ENCODE measurements at regions of chr18 and their contacts with region 1.

Region 1: GRCh38 chr18:23515911-23516546 is 12.7 kb downstream of the RMC1 start:
- DNase-seq: peak; percentile 86
- ATAC-seq: peak; percentile 96
- H3K4me3 Mint-ChIP-seq: no peak overlapping the region
- H3K27ac Mint-ChIP-seq: peak overlapping the region; percentile 52
- H3K4me1 Mint-ChIP-seq: peaks cover 21% of the 10 kb centered on the region
- H3K27me3 Mint-ChIP-seq: no peaks in the 10 kb centered on the region

Region 2: DNA sequence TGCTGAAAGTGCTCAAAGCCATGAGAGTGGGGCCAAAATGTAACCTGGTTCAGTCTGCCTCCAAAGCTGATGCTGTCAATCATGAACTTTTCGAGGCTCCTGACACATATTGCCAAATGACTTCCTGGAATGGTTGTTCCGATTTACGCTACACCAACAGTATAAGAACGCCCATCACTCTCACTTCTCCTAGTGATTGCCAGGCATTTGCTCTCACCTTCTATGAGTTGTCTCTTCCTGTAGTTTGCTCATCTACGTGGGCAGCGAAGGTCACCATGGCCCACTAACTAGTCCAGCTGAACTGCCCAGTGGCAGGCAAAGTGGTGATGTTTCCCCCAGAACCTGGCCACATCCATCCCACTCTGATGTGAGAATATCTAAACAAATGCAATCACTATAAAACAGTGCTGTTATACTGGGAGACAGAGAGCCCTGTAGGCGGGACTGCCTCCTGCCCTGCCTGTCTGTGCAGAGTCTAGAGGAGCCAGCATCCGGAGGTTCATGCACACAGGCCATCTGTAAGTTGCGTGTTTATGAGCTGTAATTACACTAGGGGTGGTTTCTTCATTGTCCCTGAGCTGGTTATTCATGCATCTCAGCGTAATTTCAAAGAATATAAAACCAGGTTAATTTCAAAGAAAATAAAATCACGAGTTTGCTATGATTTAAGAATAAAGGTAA is 389.5 kb before region 1 on chr18:
- CTCF ChIA-PET with region 1: no interaction called
- DNase-seq: no peak
- ATAC-seq: no peak
- H3K4me3 Mint-ChIP-seq: no peak overlapping the region
- H3K27ac Mint-ChIP-seq: no peak overlapping the region
- H3K4me1 Mint-ChIP-seq: no peaks in the 10 kb centered on the region
- H3K27me3 Mint-ChIP-seq: peaks cover 8% of the 10 kb centered on the region

Region 3: DNA sequence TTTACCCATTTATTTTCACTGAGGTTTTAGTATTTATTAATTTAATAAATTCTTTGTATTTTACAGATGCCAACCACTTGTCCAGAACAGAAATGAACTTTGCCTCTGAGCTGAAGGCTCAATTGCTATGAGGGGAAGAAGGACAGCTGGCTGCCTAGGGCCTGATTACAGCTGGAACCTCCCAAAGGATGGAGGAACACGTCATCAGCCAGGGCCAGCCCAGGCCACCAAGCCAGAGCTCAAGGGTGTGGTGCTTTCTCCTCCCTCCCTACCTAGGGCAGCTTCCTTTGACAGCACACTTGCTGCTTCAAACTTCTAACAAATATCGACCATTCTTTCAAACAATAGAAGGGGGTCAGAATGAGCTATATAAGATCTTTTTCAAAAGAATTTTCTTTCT is 82.7 kb before region 1 on chr18:
- CTCF ChIA-PET with region 1: no interaction called
- DNase-seq: no peak
- ATAC-seq: no peak
- H3K4me3 Mint-ChIP-seq: no peak overlapping the region
- H3K27ac Mint-ChIP-seq: no peak overlapping the region
- H3K4me1 Mint-ChIP-seq: peaks cover 15% of the 10 kb centered on the region
- H3K27me3 Mint-ChIP-seq: no peaks in the 10 kb centered on the region

Region 4: GRCh38 chr18:23503038-23503962 is 12.7 kb before region 1 on chr18 and contains the start of gene RMC1:
- CTCF ChIA-PET with region 1: interaction called, 34 read pairs
- DNase-seq: peak; percentile 97
- ATAC-seq: peak; percentile 88
- H3K4me3 Mint-ChIP-seq: peak within 1 kb of the TSS; percentile 89
- H3K27ac Mint-ChIP-seq: peak within 1 kb of the TSS; percentile 84
- H3K4me1 Mint-ChIP-seq: peaks cover 44% of the 10 kb centered on the region
- H3K27me3 Mint-ChIP-seq: no peaks in the 10 kb centered on the region
- total RNA-seq, gene RMC1: 48.7 to 51.7 TPM

Region 5: DNA sequence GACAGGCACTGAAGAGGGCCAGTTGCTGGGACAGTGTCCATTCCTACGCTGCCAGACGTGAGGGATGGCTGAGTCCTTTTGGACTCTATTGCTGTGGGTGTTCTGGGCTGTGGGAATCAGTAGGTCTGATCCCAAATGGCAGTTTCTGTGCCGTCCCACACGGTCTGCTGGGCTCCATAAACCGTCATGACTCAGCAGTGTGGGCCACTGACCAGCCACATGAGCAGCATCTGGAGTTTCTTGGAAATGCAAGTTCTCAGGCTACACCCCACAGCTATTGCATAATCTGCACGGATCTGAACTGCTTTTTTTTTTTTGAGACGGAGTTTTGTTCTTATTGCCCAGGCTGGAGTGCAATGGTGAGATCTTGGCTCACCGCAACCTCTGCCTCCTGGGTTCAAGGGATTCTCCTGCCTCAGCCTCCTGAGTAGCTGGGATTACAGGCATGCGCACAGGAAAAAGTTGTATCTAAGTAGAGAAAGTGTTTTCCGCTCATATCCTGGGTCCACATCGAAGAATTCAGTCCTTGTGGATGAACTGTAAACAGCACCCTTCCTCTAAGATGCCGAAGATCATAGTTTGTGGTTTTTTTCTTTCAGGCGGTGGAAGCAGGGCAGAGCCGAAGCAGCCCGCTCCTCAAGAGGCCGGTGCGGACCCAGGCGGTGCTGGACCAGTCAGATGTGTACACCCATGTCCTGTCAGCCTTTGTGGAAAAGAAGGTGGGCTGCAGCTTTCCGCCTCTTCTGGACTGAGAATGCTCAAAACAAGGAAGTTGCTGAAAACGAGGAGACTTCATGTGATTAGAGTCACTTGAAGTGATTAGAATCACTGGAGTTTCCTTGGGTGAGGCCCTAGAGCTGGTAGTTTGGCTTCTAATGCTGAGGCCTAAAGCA is 12.8 kb after region 1 on chr18:
- CTCF ChIA-PET with region 1: interaction called, 13 read pairs
- DNase-seq: no peak
- ATAC-seq: no peak
- H3K4me3 Mint-ChIP-seq: no peak overlapping the region
- H3K27ac Mint-ChIP-seq: no peak overlapping the region
- H3K4me1 Mint-ChIP-seq: peaks cover 7% of the 10 kb centered on the region
- H3K27me3 Mint-ChIP-seq: no peaks in the 10 kb centered on the region

Region 6: DNA sequence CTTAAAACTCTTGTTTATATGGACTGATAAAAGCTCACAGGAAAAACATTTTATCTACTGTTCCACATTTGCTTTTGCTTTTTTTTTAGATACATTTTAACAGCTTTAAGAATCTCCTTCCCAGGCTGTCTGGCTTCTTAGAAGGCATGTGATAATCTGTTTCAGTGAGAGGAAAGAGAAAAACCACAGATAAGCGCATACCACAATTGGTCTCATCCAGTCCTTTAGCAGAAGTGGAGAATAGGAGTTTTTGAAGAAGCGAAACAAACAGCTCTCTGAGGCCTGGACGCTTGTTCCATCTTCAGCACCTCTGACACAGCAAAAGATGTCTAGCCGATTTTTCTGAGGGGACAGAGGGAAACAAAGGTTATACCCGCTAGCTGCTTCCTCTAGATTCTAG is 24.8 kb after region 1 on chr18:
- CTCF ChIA-PET with region 1: interaction called, 11 read pairs
- DNase-seq: peak; percentile 56
- ATAC-seq: peak; percentile 68
- H3K4me3 Mint-ChIP-seq: peak overlapping the region; percentile 41
- H3K27ac Mint-ChIP-seq: peak overlapping the region; percentile 72
- H3K4me1 Mint-ChIP-seq: peaks cover 35% of the 10 kb centered on the region
- H3K27me3 Mint-ChIP-seq: no peaks in the 10 kb centered on the region

Region 7: DNA sequence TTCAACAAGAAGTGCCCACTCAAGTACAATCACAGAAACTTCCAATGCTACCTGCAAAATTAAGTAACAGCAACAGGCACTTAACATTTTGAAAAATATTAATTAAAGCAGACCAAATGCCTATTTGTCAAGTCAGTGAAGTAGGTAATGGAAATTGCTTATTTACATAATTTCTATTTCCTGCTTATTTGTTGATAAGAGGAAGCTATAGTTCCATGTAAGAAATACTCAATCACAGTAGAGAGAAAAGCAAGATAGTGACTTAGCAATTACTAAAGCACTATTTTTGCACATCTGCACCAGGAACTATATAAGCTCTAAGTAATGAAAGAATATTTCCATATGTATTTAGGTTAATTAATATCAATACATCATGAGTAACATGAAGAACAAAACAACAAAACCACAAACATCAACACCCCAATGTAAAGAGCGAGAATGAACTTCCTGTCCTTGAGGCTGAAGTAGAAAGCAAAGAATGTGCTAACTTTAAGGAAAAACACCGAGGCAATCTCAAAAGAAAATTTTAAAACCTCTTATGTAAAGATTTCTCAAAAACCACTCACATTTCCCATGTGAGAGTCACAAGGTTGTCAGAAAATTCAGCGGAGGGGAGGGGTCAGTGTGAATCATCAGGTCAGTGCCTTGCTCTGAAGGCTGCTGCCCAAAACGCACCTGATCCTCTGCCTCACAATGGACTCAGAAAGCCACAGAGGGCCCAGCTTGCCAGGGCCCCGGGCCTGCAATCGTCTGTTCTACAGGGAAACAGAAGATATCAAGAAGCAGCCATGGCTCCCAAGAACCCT is 57.8 kb after region 1 on chr18:
- CTCF ChIA-PET with region 1: interaction called, 12 read pairs
- DNase-seq: peak; percentile 61
- ATAC-seq: peak; percentile 70
- H3K4me3 Mint-ChIP-seq: peak overlapping the region; percentile 3
- H3K27ac Mint-ChIP-seq: peak overlapping the region; percentile 81
- H3K4me1 Mint-ChIP-seq: peaks cover 38% of the 10 kb centered on the region
- H3K27me3 Mint-ChIP-seq: no peaks in the 10 kb centered on the region

Region 8: GRCh38 chr18:23586249-23587196 is 70.5 kb after region 1 on chr18 and contains the start of gene NPC1:
- CTCF ChIA-PET with region 1: interaction called, 86 read pairs
- DNase-seq: peak; percentile 95
- ATAC-seq: peak; percentile 93
- H3K4me3 Mint-ChIP-seq: peak within 1 kb of the TSS; percentile 94
- H3K27ac Mint-ChIP-seq: peak within 1 kb of the TSS; percentile 98
- H3K4me1 Mint-ChIP-seq: peaks cover 38% of the 10 kb centered on the region
- H3K27me3 Mint-ChIP-seq: no peaks in the 10 kb centered on the region
- total RNA-seq, gene NPC1: 36.1 to 37.4 TPM

Region 9: GRCh38 chr18:23703057-23703986 is 187.3 kb after region 1 on chr18:
- CTCF ChIA-PET with region 1: interaction called, 10 read pairs
- DNase-seq: no peak
- ATAC-seq: no peak
- H3K4me3 Mint-ChIP-seq: no peak overlapping the region
- H3K27ac Mint-ChIP-seq: no peak overlapping the region
- H3K4me1 Mint-ChIP-seq: peaks cover 8% of the 10 kb centered on the region
- H3K27me3 Mint-ChIP-seq: peaks cover 51% of the 10 kb centered on the region

Measured in activated CD8-positive, alpha-beta memory T cell treated with anti-CD3 and anti-CD28 coated beads, Interleukin-2, amount 10 ng/mL, durations not matched to agents 7 days and 5 days (primary cell).